Heart right ventricle (tissue), 16 donors: ENCODE measurements at regions of chr16 and their contacts with region 1.

Region 1: DNA sequence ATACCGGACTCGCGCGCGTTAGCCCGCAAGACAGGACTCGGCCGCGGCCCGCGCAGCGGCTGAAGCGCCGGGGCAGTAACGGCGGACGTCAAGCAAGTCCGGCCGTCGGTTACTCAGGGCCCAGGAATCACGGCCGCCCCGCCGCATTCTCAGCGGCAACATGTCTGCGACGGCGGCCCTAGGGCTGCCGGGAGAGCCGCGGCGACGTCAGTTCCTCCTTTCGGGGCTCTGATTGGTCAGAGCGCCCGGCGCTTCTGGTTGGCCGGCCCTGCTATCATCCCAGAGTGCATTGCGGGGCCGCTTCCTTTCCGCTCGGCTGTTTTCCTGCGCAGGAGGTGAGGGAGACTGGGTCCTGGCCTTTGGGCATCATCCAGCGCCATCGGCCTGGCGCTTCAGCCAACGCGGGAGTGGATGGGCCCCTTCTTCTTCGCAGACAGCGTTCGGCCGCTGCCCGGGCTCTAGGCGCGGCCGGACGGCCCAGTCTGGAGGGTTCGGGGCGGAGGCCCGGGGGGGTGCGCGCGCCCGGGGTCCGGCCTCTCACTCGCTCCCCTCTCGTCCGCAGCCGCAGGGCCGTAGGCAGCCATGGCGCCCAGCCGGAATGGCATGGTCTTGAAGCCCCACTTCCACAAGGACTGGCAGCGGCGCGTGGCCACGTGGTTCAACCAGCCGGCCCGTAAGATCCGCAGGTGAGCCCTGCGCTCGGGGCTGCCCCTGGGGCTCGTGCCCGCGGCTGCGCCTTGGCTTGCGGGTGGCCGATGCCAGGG is at the start of gene RPL13:
- DNase-seq: peak; percentile 94 to 95
- ATAC-seq: peak; percentile 93 to 98 (median 97)
- H3K4me3 ChIP-seq: peak within 1 kb of the TSS; percentile 70 to 98 (median 84)
- H3K27ac ChIP-seq: peak within 1 kb of the TSS; percentile 85 to 99 (median 96)
- H3K4me1 ChIP-seq: peaks cover 21 to 68% (median 52%) of the 10 kb centered on the region in 9 donors
- H3K27me3 ChIP-seq: no peaks in the 10 kb centered on the region
- CTCF ChIP-seq: peak in 1 of 9 donors; percentile 18
- total RNA-seq, gene RPL13: 786 to 1,426 (median 935) TPM

Region 2: DNA sequence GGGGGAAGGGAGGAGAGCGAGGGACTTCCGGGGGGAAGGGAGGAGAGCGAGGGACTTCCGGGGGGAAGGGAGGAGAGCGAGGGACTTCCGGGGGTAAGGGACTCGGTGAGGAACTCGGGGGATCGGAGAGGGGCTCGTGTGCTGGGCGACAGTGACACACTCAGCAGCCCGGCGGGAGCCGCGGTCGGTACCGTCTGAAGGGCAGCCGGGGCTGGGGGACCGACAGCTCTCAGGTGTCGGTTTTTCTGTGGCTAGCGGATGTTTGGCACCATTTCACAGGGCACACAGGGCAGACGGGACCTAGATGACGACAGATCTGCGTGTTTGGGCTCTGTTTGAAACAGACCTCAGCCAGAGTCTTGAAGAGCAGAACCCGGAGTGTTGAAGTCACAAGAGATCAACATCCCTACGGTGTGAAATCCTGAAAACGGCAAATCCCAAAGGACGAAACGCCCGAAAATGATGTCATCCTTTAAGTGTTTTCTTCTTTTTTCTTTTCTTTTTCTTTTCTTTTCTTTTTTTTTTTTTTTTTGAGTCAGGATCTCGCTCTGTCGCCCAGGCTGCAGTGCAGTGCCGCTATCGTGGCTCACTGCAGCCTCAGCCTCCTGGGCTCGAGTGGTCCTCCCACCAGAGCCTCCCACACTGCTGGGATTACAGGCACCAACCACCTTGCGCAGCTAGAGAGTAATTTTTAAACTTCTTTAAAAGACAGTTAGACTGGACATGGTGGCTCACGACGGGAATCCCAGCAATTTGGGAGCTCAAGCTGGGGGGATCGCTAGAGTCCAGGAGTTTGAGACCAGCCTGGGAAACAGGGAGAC is 319.2 kb before region 1 on chr16:
- intact Hi-C with region 1: loop called in 1 of 10 experiments (anchors 5 kb)
- DNase-seq: peak; percentile 62 to 72
- ATAC-seq: peak; percentile 74 to 84 (median 80)
- H3K4me3 ChIP-seq: peak overlapping the region; percentile 7 to 91 (median 69)
- H3K27ac ChIP-seq: peak overlapping the region; percentile 77 to 99 (median 92)
- H3K4me1 ChIP-seq: peaks cover 0 to 17% (median 11%) of the 10 kb centered on the region in 9 donors
- H3K27me3 ChIP-seq: peaks cover 0 to under 1% (median 0%) of the 10 kb centered on the region in 7 donors
- CTCF ChIP-seq: no peak

Region 3: DNA sequence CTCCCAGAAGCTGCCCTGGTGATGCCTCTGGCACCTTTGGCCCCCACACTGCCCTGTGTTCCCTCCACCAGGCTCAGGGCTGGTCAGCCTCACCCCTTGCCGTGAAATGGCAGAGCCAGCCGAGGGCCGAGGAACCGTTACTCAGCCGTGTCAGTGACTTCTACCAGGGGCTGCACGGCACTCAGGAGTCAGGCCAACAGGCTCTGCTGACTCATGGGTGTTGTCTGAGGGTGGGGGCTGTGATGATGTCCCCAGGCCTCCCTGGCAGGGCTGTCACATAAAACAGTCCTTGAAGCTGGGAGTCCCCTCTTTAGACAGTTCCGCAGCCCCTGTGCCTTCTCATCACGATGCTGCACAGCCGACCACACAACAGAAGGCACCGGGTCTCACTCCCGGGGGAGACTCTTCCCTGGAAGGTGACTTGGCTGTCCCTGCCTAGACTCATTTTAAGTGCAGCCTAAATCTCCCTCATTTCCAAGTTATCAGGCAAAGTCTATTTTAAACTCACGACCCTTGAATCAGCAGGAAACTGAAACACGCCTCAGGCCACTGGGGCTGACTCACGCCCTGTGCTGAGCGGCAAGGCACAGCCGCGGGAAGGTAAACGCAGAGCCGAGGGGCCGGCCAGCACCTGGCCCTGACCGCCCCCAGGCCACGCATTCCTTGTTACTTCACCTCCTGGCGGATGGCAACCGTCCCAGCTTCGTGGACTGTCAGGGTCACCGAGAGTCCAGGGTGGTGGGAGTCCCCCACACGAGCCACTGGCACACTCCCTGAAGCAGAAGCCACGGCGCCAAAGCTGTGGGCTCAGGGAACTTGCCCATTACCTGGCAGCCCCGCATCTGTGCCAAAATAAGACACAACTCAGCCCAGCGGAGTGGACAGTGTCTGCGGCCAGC is 240.4 kb before region 1 on chr16:
- intact Hi-C with region 1: loop called in 1 of 10 experiments (anchors 10 kb)
- DNase-seq: peak in 1 of 2 donors; percentile 41
- ATAC-seq: peak; percentile 27 to 80 (median 64)
- H3K4me3 ChIP-seq: peak overlapping the region in 7 of 10 donors; percentile 6 to 29 (median 26)
- H3K27ac ChIP-seq: peak overlapping the region; percentile 42 to 92 (median 81)
- H3K4me1 ChIP-seq: peaks cover 47 to 100% (median 97%) of the 10 kb centered on the region in 9 donors
- H3K27me3 ChIP-seq: no peaks in the 10 kb centered on the region
- CTCF ChIP-seq: no peak

Region 4: DNA sequence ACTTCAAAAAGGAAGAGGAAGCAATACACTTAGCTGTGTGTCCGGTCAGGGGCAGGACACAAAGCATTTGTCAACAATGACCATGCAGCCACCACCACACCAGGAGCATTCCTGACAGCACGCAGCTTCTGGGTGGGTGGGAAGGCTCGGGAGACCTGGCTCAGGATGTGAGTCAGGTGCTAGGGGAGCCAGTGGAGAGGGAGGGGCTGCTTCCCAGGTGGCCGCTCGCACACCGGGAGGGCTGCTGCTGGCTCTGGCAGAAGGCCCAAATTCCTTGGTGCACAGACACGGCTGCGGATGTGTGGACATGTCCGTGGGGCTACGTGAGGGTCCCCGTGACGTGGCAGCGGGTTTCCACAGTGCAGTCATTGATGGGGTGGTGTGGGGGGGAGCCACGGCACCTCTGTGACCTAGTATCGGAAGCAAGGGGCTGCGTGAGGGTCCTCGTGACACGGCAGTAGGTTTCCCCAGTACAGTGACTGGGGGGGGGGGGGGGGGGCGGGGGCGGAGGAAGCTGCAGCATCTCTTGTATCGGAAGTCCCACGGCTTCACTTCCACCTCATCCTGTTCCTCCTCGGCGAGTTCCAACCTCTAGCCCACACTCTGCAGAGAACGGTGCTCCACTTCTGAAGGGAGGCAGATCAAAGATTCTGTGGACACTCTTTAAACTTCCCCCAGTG is 230.2 kb before region 1 on chr16:
- intact Hi-C with region 1: loop called in 9 of 10 experiments (anchors 2 to 10 kb)
- DNase-seq: no peak
- ATAC-seq: peak in 6 of 8 donors; percentile 20 to 50 (median 34)
- H3K4me3 ChIP-seq: peak overlapping the region in 4 of 10 donors; percentile 7 to 18 (median 10)
- H3K27ac ChIP-seq: peak overlapping the region in 9 of 10 donors; percentile 13 to 78 (median 42)
- H3K4me1 ChIP-seq: peaks cover 32 to 93% (median 71%) of the 10 kb centered on the region in 9 donors
- H3K27me3 ChIP-seq: no peaks in the 10 kb centered on the region
- CTCF ChIP-seq: no peak

Region 5: DNA sequence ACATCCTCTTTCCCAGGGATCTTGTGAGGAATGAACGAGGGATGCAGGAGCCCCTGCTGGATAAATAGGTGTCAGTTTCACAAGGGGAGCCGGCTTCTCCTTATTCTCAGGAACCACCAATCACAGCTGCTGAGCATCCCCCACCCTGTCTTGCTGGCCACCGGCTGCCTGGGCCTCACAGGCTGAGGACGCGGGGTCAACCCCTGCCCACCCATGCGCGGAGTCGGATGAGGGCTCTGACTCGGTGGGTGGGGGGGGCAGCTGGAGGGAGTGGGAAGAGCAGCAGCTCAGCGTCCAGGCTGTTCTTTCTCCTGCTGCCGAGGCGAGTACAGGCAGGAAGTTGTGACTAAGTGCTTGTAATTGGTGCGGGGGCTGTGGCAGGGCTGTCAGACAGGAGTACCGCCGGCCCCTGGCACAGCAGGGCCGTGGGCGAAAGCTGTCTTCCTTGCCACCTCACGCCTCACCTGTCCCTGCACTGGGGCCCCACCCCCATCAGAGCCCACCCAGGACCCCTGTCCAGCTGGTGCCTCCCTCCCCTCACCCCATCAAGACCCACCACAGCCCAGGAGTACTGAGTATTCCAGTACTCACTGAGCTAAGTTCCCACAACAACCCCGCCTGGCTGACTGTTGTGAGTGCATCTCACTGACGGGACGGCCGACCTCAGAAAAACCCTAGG is 41.9 kb after region 1 on chr16:
- intact Hi-C with region 1: no loop called
- DNase-seq: peak in 1 of 2 donors; percentile 29
- ATAC-seq: peak in 7 of 8 donors; percentile 57 to 88 (median 75)
- H3K4me3 ChIP-seq: no peak overlapping the region
- H3K27ac ChIP-seq: no peak overlapping the region
- H3K4me1 ChIP-seq: peaks cover 0 to 14% (median 7%) of the 10 kb centered on the region in 9 donors
- H3K27me3 ChIP-seq: peaks cover 0 to 28% (median 12%) of the 10 kb centered on the region in 7 donors
- CTCF ChIP-seq: no peak

Region 6: GRCh38 chr16:89720813-89721545 is 160.4 kb after region 1 on chr16 and contains the starts of genes VPS9D1 and ZNF276:
- intact Hi-C with region 1: loop called in 1 of 10 experiments (anchors 5 kb)
- DNase-seq: peak; percentile 88
- ATAC-seq: peak; percentile 68 to 89 (median 81)
- H3K4me3 ChIP-seq: peak within 1 kb of the TSS; percentile 62 to 99 (median 90)
- H3K27ac ChIP-seq: peak within 1 kb of the TSS; percentile 89 to 100 (median 98)
- H3K4me1 ChIP-seq: peaks cover 26 to 61% (median 39%) of the 10 kb centered on the region in 9 donors
- H3K27me3 ChIP-seq: no peaks in the 10 kb centered on the region
- CTCF ChIP-seq: no peak
- total RNA-seq, gene VPS9D1: 9.3 to 15.6 (median 11.8) TPM
- total RNA-seq, gene ZNF276: 8.2 to 16.0 (median 12.8) TPM